Activated CD4-positive, alpha-beta memory T cell treated with anti-CD3 and anti-CD28 coated beads for 36 hours (primary cell): ENCODE measurements at regions of chr5 and their contacts with region 1.

Region 1: GRCh38 chr5:94793113-94793815 is 174.8 kb downstream of the SLF1 start:
- DNase-seq: peak; percentile 25
- H3K4me3 Mint-ChIP-seq: peak overlapping the region; percentile 39
- H3K27ac Mint-ChIP-seq: peak overlapping the region; percentile 84
- H3K4me1 Mint-ChIP-seq: peaks cover 35% of the 10 kb centered on the region
- H3K27me3 Mint-ChIP-seq: peaks cover 2% of the 10 kb centered on the region

Region 2: DNA sequence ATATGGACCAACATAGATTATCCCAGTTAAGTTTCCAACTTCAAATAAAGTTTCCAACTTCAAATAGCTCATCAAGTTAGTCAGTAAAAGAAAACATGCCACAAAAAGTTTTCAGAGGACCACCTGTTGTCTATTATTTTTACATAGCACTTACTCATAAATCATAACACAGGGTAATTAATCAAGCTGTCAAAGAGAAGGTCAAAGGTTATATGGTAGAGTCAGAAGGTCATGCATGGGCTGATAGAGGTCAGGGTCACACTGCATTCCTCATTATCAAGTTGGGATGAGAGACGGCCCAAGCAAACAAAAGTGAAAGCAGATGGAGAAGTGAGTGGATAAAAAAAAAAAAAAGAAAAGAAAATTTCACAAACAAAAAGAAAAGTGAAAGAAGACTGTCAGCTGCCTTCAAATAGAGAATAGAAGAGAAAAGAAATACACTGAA is 906.3 kb before region 1 on chr5:
- CTCF ChIA-PET with region 1: no interaction called
- POLR2A ChIA-PET with region 1: no interaction called
- intact Hi-C with region 1: loop called (anchors 5 kb)
- DNase-seq: no peak
- H3K4me3 Mint-ChIP-seq: no peak overlapping the region
- H3K27ac Mint-ChIP-seq: no peak overlapping the region
- H3K4me1 Mint-ChIP-seq: peaks cover 11% of the 10 kb centered on the region
- H3K27me3 Mint-ChIP-seq: no peaks in the 10 kb centered on the region

Region 3: GRCh38 chr5:94577466-94578245 is 215.6 kb before region 1 on chr5:
- CTCF ChIA-PET with region 1: no interaction called
- POLR2A ChIA-PET with region 1: no interaction called
- intact Hi-C with region 1: loop called (anchors 5 kb)
- DNase-seq: no peak
- H3K4me3 Mint-ChIP-seq: no peak overlapping the region
- H3K27ac Mint-ChIP-seq: peak overlapping the region; percentile 25
- H3K4me1 Mint-ChIP-seq: peaks cover 42% of the 10 kb centered on the region
- H3K27me3 Mint-ChIP-seq: no peaks in the 10 kb centered on the region

Region 4: DNA sequence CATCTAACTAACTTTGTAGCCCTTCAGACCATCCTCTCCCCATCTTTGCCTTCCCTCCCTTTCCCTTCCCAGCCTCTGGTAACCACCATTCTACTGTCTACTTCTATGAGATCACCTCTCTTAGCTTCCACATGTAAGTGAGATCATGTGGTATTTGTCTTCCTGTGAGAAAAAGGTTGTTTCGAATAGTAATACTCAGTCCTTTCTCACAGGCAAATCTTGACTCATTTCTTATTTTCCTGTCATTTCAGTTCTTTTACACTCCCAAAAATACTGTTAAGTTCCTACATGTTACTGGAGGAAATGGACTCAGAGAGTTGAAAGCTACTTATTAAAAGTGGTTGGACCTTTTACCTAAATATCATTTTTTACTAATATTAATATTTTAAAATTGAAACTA is 92.7 kb before region 1 on chr5:
- CTCF ChIA-PET with region 1: no interaction called
- POLR2A ChIA-PET with region 1: no interaction called
- intact Hi-C with region 1: loop called (anchors 1 kb)
- DNase-seq: no peak
- H3K4me3 Mint-ChIP-seq: no peak overlapping the region
- H3K27ac Mint-ChIP-seq: no peak overlapping the region
- H3K4me1 Mint-ChIP-seq: peaks cover 5% of the 10 kb centered on the region
- H3K27me3 Mint-ChIP-seq: no peaks in the 10 kb centered on the region

Region 5: DNA sequence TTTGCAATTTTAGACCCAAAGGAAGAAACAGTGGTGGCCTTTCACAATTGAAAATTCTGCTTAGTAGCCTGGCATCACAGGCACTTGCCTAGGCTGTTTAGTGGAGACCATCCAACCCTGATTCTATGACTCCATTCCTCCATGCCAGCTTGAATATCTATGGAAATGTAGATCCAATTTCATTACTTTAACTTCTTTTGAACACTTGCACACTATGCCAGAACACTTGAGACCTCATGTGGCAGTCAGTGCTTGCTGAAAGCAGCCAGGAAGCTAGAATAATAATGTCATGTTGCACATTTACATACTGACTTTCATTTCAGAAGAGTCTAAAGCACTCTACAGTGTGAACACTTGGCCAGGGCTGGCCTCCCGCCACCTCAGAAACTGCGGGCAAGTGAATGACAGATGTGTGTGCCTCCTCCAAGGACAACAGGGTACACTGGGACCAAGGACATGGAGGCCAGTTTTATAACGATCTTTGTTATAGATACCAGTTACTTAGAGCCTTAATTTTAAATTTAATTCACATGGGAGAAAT is 77.5 kb before region 1 on chr5:
- CTCF ChIA-PET with region 1: no interaction called
- POLR2A ChIA-PET with region 1: no interaction called
- intact Hi-C with region 1: no loop called
- DNase-seq: no peak
- H3K4me3 Mint-ChIP-seq: no peak overlapping the region
- H3K27ac Mint-ChIP-seq: no peak overlapping the region
- H3K4me1 Mint-ChIP-seq: no peaks in the 10 kb centered on the region
- H3K27me3 Mint-ChIP-seq: no peaks in the 10 kb centered on the region

Region 6: GRCh38 chr5:94849821-94850736 is 56.8 kb after region 1 on chr5:
- CTCF ChIA-PET with region 1: no interaction called
- POLR2A ChIA-PET with region 1: interaction called, 3 read pairs
- intact Hi-C with region 1: loop called (anchors 2 kb)
- DNase-seq: peak; percentile 17
- H3K4me3 Mint-ChIP-seq: no peak overlapping the region
- H3K27ac Mint-ChIP-seq: no peak overlapping the region
- H3K4me1 Mint-ChIP-seq: peaks cover 7% of the 10 kb centered on the region
- H3K27me3 Mint-ChIP-seq: peaks cover 1% of the 10 kb centered on the region